ENCODE measurements at regions of chr11 and their contacts with region 1.

Region 1: DNA sequence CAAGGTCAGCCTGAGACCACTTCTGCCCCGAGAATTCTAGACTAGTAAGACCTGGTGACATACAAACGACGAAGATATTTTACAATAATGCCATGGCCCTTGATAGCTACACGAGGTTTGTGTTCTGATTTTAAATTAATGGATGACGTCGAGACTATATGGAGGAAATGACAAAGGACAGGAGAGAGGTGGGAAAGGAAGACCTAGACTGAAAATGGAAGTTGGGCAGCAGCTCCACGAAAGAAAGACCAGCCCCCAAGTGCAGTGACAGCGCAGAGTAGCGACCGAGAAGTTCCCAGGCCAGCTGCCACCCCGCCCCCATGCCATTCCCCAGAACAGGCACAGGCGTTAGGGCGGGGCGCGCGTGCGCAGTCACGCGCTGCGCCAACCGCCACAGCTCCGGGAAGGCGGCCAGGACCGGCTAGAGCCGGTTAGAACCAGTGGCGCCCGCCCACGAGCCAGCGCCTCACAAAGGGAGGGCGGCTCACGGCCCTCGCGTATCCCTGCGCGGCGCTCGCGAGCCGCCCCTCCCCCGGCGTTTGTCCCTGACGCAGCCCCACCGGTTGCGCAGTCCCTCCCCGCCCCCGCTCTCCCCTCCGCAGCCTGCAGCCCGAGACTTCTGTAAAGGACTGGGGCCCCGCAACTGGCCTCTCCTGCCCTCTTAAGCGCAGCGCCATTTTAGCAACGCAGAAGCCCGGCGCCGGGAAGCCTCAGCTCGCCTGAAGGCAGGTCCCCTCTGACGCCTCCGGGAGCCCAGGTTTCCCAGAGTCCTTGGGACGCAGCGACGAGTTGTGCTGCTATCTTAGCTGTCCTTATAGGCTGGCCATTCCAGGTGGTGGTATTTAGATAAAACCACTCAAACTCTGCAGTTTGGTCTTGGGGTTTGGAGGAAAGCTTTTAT is 1.5 kb upstream of the MALAT1 start:
- DNase-seq: peak; percentile 85

Region 2: GRCh38 chr11:65317074-65317786 is 180.2 kb before region 1 on chr11:
- CTCF ChIA-PET with region 1: no interaction called
- POLR2A ChIA-PET with region 1: no interaction called
- DNase-seq: no peak

Region 3: GRCh38 chr11:65354265-65355012 is 143.0 kb before region 1 on chr11 and contains the start of gene TIGD3:
- CTCF ChIA-PET with region 1: no interaction called
- POLR2A ChIA-PET with region 1: interaction called, 13 read pairs
- DNase-seq: peak; percentile 98

Region 4: GRCh38 chr11:65440831-65441499 is 56.4 kb before region 1 on chr11:
- CTCF ChIA-PET with region 1: no interaction called
- POLR2A ChIA-PET with region 1: interaction called, 107 read pairs
- DNase-seq: no peak

Region 5: GRCh38 chr11:65454696-65455456 is 42.5 kb before region 1 on chr11:
- CTCF ChIA-PET with region 1: no interaction called
- POLR2A ChIA-PET with region 1: interaction called, 107 read pairs
- DNase-seq: peak; percentile 71

Region 6: GRCh38 chr11:65477149-65477965 is 20.0 kb before region 1 on chr11:
- CTCF ChIA-PET with region 1: interaction called, 12 read pairs
- POLR2A ChIA-PET with region 1: interaction called, 1,783 read pairs
- DNase-seq: peak; percentile 91